Natural killer cell (primary cell): ENCODE measurements at regions of chr13 and their contacts with region 1.

Region 1: DNA sequence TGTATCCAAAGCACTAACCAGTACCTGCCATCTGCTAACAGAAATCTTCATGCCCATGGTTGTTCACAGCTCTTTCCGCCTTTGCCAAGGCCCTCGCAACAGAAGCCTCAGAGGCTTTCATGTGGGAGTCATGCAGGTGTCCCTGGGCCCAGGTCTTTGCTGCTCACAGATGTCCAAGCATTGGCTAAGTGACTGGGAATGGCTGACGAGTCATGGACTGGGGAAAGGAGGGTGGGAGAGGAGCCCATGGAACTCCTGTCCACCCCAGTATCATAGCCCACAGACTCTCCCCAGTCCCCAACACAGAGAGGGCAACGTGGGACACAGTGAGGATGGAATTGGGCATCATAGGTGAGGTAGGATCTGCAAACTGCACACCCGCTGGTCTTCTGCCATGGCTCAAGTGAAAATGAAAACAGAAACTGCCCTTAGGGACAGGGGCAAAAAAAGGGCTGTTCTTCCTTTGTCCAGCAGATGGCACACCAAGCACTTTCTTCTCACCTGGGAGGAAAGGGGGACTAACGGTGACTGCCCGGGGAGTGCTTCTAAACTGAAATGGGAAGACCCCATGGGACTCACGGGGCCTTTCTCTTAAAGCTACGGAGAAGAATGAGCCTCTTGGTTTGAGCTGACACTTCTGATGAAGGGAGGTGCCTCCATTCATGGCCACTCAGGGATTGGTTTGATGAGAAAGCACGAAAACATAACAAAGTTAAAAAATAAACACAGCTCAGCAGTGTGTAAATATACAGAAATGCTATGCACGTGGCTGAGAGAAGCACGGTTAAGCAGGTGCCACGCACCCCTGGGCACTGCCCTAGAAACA is 11.1 kb upstream of the DHRS12 start:
- DNase-seq: peak; percentile 60 to 91
- ATAC-seq: peak; percentile 87 to 91 (median 88)
- H3K4me3 ChIP-seq: no peak overlapping the region
- H3K4me3 Mint-ChIP-seq: peak overlapping the region; percentile 21
- H3K27ac ChIP-seq: no peak overlapping the region
- H3K27ac Mint-ChIP-seq: peak overlapping the region; percentile 60 to 78
- H3K4me1 ChIP-seq: peaks cover 31% of the 10 kb centered on the region
- H3K4me1 Mint-ChIP-seq: peaks cover 18 to 23% of the 10 kb centered on the region in 2 donors
- H3K27me3 ChIP-seq: no peaks in the 10 kb centered on the region
- H3K27me3 Mint-ChIP-seq: peaks cover 7 to 9% of the 10 kb centered on the region in 2 donors
- CTCF ChIP-seq: peak; percentile 85

Region 2: DNA sequence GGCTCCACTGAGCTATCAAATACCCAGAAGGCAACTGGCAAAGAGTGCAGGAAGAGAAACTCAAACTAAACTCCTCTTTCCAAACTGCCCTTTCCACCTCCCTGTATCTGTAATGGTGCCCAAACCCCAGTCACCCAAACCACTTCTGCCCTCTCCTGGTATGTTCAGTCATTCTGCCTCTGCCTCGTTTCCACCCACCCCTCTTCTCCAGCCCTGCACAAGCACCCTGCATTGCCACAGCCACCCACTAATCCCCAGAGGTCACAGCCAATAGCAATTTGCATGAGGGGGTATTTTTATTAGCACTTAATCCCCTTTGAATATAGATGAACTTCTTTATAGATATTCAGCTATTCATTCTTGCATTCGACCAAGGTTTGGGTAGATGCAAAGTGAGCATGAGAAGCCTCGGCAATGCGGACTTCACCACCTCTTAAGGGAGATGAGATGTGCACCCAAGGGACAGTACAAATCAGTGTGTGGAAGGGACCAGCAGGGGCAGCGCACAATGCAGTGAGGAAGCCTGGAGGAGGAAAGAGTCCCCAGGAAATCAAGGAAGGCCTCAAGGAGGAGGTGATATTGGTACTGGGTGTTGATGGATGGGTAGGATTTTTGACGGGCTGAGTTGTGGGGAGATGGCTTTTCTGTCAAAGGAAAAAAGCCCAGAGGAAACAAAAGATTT is 17.6 kb after region 1 on chr13:
- intact Hi-C with region 1: loop called (anchors 1 kb)
- DNase-seq: peak in 1 of 2 donors; percentile 86
- ATAC-seq: peak; percentile 84 to 96 (median 90)
- H3K4me3 ChIP-seq: no peak overlapping the region
- H3K4me3 Mint-ChIP-seq: no peak overlapping the region
- H3K27ac ChIP-seq: no peak overlapping the region
- H3K27ac Mint-ChIP-seq: no peak overlapping the region
- H3K4me1 ChIP-seq: peaks cover 3% of the 10 kb centered on the region
- H3K4me1 Mint-ChIP-seq: peaks cover 0 to 10% of the 10 kb centered on the region in 2 donors
- H3K27me3 ChIP-seq: no peaks in the 10 kb centered on the region
- H3K27me3 Mint-ChIP-seq: peaks cover 3 to 12% of the 10 kb centered on the region in 2 donors
- CTCF ChIP-seq: peak; percentile 40

Region 3: DNA sequence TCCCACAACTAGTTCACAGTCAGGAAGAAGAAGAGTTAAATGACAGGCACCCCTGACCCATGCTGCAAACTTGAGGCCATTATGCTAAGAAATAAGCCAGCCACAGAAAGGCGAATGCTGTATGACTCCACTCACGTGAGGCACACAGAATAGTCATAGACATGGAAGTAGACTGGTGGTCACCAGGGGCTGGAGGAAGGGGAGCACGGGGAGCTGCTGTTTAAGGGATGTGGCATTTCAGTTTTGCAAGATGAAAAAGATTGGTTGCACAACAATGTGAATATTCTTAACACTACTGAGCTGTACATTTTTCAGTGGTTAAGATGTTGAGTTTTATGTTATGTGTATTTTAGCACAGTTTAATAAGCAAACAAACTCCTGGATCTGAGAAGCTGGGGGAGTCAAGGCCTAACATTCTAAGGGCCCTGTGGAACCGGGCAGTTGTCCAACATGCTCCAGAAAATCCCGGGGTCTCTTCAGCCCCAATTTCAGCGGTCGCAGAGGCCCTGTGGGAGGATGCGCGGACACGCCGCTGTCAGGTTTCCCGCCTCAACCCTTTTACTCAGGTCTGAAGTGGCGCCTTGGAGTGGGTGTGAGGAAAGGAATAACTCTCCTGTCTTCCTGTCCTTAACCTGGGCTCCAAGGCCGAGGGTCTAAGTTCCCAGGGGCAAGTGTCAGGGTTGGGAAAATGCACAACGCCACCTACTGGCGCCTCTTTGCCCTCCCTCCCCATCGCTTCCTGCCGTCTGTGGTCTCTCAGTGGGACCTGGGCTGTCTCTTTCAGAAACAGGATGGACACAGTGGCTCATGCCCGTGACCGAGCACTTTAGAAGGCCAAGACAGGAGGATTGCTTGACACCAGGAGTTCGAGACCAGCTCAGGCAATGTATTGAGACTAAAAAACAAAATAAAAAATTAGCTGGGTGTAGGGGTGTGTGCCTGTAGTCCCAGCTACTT is 34.4 kb after region 1 on chr13:
- intact Hi-C with region 1: loop called (anchors 2 kb)
- DNase-seq: peak in 1 of 2 donors; percentile 65
- ATAC-seq: peak in 2 of 3 donors; percentile 42 to 60
- H3K4me3 ChIP-seq: no peak overlapping the region
- H3K4me3 Mint-ChIP-seq: no peak overlapping the region
- H3K27ac ChIP-seq: no peak overlapping the region
- H3K27ac Mint-ChIP-seq: no peak overlapping the region
- H3K4me1 ChIP-seq: peaks cover 6% of the 10 kb centered on the region
- H3K4me1 Mint-ChIP-seq: peaks cover 0 to 7% of the 10 kb centered on the region in 2 donors
- H3K27me3 ChIP-seq: peaks cover 2% of the 10 kb centered on the region
- H3K27me3 Mint-ChIP-seq: peaks cover 7 to 13% of the 10 kb centered on the region in 2 donors
- CTCF ChIP-seq: peak; percentile 46

Region 4: DNA sequence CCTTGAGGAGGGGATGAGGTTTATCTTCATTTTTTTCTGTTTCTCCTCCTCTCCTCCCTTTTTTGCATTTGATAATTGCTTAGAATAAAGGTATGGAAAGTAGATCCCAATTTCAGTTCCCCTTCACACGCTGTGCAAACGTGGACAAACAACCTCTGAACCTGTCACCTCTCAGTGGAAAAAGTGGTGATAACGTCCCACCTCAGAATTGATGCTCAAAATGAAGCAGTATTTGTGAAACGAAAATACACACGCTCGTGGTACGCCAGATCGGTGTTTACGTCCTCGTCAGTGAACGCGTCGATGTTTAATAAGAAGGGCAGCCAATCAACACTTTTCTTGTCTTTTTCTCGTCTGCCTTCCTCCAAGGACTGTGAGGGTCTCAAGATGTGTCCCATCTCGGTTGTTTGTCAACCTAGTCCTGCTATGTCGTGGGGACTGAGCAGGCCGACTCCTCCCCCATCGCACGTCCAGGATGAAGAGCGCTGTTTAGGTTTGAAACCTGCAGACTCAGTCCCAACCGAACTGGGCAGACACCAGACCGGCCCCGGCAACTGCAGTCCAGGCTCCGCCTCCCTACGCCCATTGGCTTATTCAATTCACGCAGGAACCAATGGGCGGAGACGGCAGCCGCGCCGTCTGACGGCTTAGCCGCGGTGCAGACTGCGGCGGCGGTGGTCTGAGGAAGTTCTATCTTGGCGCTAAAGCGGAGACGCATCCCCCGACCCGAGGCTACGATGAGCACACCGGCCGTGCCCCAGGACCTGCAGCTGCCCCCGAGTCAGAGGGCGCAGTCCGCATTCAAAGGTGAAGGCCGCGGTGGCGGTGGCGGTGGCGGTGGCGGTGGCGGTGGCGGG is 640.0 kb after region 1 on chr13 and contains the start of gene CKAP2:
- intact Hi-C with region 1: no loop called
- DNase-seq: peak; percentile 94 to 97
- ATAC-seq: peak; percentile 77 to 88 (median 80)
- H3K4me3 ChIP-seq: peak within 1 kb of the TSS; percentile 60
- H3K4me3 Mint-ChIP-seq: peak within 1 kb of the TSS; percentile 88
- H3K27ac ChIP-seq: peak within 1 kb of the TSS; percentile 80
- H3K27ac Mint-ChIP-seq: peak within 1 kb of the TSS; percentile 93 to 97
- H3K4me1 ChIP-seq: peaks cover 12% of the 10 kb centered on the region
- H3K4me1 Mint-ChIP-seq: peaks cover 21 to 28% of the 10 kb centered on the region in 2 donors
- H3K27me3 ChIP-seq: no peaks in the 10 kb centered on the region
- H3K27me3 Mint-ChIP-seq: peaks cover 0 to 2% of the 10 kb centered on the region in 2 donors
- CTCF ChIP-seq: no peak
- total RNA-seq, gene CKAP2: 12.0 to 15.6 (median 13.1) TPM